ENCODE measurements at regions of chr11 and their contacts with region 1.

Region 1: DNA sequence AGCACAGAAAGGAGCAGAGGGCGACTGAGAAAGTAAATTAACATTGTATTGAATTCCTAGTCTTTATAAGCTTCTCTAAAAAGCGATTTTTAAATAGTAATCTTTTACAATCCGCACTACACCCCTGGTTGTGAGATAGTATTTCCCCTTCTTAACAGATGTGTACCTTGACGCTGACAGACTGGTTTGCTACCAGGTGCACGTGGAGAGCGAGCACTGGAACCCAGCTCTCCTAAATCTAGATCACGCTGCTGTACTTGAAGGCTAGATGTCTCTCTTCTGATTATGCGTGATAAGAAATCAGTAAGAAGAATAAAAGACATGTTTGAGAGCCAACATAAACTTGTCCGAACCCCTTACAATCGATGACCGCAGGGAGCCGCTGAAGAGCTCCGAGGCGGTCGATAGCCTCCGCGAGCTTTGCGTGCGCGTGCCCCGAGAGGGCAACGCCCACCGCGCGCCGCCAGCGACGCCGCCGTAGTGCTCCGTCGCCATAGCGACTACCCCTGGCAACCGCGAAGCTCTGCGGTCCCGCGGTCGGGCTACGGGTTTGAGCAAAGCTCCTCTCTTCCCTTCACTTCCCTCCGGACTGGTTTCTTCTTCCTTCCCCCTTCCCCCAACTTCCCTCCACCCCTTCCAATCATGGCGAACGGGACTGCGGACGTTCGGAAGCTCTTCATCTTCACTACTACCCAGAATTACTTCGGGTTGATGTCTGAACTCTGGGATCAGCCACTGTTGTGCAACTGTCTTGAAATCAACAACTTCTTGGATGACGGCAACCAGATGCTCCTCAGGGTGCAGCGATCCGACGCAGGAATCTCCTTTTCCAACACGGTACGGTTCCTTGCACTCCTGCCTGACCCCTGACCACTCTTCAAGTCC is at the start of gene DYNC2H1:
- DNase-seq: peak; percentile 67 to 91 (median 84)
- H3K4me3 ChIP-seq: peak within 1 kb of the TSS; percentile 57 to 90 (median 76)
- H3K27ac ChIP-seq: peak within 1 kb of the TSS in 44 of 59 donors; percentile 1 to 81 (median 48)
- H3K27me3 ChIP-seq: no peaks in the 10 kb centered on the region
- CTCF ChIP-seq: peak; percentile 31 to 73 (median 61)
- total RNA-seq, gene DYNC2H1: 28.3 to 52.3 (median 40.6) TPM

Region 2: DNA sequence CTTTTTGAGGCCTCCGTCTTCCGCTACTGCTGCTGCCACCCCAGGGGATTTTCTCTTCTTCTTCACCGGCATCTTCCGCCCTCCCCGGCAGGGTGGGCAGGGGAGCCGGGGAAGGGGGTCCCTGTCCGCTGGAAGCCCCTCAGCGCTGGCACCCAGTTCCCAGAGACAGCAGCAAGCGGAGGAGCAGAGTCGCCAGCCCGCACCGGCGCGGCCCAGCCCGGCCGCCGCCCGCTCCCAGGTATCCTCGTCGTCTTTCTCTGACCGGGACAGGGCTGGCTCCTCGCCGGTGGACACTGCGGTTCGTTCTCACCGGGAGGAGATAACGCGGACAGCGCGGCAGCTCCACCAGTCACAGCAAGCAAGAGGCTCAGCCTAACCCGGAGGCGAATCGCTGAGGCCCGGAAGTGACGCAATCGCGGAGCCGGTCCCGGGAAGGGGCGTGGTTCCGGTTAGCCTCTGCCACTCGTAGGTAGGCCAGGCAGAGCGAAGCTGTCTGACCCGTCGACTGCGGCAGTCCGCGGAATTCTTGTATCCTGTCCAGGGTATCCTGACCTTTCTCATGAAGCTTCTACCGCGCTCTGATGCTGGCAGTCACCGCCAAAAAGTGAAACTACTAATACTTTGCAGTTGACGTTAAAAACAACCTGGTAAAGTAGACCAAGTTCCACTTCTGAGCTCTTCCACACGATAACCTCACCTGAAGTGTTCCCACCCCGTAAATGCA is 17.2 kb before region 1 on chr11 and contains the start of gene DCUN1D5:
- intact Hi-C with region 1: loop called in 1 of 2 experiments (anchors 1 kb)
- DNase-seq: peak; percentile 96 to 99 (median 98)
- H3K4me3 ChIP-seq: peak within 1 kb of the TSS; percentile 69 to 100 (median 94)
- H3K27ac ChIP-seq: peak within 1 kb of the TSS in 56 of 59 donors; percentile 9 to 91 (median 76)
- H3K27me3 ChIP-seq: peaks cover 0 to 27% (median 5%) of the 10 kb centered on the region in 45 donors
- CTCF ChIP-seq: peak in 13 of 56 donors; percentile 16 to 40 (median 27)
- total RNA-seq, gene DCUN1D5: 20.0 to 43.8 (median 31.2) TPM

Measured in dorsolateral prefrontal cortex (tissue), 120 donors.